ENCODE measurements at regions of chr12 and their contacts with region 1.

Region 1: DNA sequence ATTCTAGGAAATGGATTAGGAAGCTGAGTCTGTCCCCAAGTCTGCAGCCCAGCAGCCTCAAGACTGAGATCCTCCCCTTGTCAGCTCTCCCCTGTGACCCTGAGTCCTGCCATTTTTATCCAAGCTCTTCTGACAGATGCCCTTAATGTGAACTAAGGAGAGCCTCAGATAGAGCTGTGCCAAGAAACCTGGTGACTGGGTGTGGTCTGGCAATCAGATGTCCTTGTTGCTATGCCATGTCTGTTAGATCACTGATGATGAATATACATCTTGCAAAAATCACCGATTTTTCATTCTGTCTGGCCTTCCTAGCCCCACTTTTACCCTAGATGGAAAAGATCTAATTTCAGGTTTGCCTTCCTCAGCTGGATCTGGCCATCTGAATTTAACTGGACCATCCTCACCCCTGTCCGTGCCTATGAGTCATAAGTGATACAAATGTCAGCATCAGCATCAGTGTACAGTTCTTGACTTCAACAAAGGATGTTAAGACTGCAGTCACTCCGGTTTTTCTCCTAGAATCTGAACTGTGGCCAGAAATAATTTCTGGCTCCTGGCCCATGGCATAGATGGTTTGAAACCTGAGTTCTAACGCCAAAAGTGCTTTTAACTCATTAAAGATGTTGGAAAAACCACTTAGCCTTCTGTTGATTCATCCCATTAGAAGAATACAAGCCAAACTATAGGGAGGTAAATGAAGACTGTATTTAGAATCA is 61.2 kb upstream of the GRIP1 start:
- DNase-seq: no peak
- H3K4me3 ChIP-seq: no peak overlapping the region
- H3K27ac ChIP-seq: no peak overlapping the region
- H3K4me1 ChIP-seq: no peaks in the 10 kb centered on the region
- H3K27me3 ChIP-seq: no peaks in the 10 kb centered on the region
- CTCF ChIP-seq: no peak
- POLR2A ChIP-seq: no peak

Region 2: DNA sequence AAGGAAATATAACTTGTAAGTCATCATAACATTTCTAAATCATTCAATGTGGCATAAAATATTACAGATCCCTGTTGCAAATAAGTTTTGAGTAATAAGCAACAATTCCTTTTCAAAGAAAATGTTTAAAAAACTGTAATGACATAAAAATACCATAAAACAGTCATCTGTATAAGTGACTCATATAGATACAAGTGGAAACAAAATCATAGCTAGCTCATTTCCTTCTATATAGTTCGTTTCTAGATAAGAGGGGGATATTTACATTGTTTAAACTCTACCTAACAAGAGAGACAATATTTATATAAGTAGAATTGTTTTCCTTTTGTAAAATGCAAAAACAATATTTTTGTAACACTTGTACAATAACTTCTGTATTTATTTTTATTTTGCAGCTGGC is 210.2 kb before region 1 on chr12:
- intact Hi-C with region 1: loop called (anchors 10 kb)
- DNase-seq: no peak
- H3K4me3 ChIP-seq: no peak overlapping the region
- H3K27ac ChIP-seq: no peak overlapping the region
- H3K4me1 ChIP-seq: no peaks in the 10 kb centered on the region
- H3K27me3 ChIP-seq: no peaks in the 10 kb centered on the region
- CTCF ChIP-seq: no peak
- POLR2A ChIP-seq: no peak

Measured in breast epithelium (tissue), 4 donors.